Stomach (tissue), 19 donors: ENCODE measurements at regions of chr9 and their contacts with region 1.

Region 1: GRCh38 chr9:126781186-126782052 is 23.4 kb upstream of the ZBTB43 start:
- DNase-seq: peak; percentile 89 to 92
- H3K4me3 ChIP-seq: no peak overlapping the region
- H3K27ac ChIP-seq: no peak overlapping the region
- H3K4me1 ChIP-seq: peaks cover 0 to 7% (median 6%) of the 10 kb centered on the region in 4 donors
- H3K27me3 ChIP-seq: peaks cover 0 to 95% (median 24%) of the 10 kb centered on the region in 3 donors
- CTCF ChIP-seq: peak in 5 of 7 experiments; percentile 79 to 97 (median 94)
- EP300 ChIP-seq: no peak
- POLR2A ChIP-seq: no peak

Region 2: GRCh38 chr9:126611592-126612325 is 169.7 kb before region 1 on chr9:
- intact Hi-C with region 1: loop called (anchors 10 kb)
- DNase-seq: peak; percentile 81 to 90
- H3K4me3 ChIP-seq: peak overlapping the region; percentile 27 to 49 (median 32)
- H3K27ac ChIP-seq: no peak overlapping the region
- H3K4me1 ChIP-seq: peaks cover 39 to 56% (median 52%) of the 10 kb centered on the region in 4 donors
- H3K27me3 ChIP-seq: peaks cover 31 to 99% (median 74%) of the 10 kb centered on the region in 3 donors
- CTCF ChIP-seq: peak in 5 of 7 experiments; percentile 71 to 91 (median 73)
- EP300 ChIP-seq: no peak
- POLR2A ChIP-seq: no peak

Region 3: DNA sequence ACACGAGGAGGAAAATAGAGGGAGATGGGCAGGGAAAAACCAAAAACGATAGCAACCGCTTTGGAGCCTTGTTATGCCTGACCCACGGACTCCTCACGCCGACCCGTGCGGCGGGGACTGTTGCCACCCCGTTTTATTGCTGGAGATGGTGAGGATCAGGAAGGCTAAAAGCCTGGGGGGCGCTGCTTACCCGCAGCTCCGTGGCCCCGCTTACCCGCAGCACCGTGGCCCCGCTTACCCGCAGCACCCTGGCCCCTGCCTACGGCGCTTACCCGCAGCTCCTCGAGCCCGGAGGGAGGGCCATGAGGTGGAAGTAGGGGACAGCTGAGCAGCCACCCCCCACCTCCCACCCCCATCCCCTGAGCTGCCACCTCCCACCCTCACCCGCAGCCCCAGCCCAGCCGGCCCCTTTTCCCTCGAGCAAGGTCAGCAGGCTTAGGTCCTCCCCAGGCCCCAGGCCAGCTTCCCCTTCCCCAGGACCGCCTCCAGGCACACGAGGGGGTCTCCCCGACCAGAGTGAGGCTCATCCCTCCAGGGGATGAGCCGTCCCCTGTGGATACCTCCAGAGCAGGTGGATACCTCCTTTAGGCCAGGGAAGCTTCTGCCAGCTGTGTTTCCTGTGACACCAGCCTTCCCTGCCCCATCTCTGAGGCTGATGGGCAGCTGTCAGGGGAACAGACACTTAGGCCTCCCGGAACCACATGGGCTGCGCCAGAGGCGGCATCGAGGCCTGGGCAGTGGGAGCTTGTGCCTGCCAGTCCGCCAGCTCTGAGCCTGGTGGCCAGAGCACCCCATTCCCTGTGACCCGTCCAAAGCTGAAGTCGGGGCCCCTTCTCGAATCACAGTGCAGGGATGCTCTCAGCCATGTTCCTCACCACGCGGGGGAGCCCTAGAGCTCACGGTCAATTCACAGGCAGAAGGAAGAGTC is 75.4 kb before region 1 on chr9:
- intact Hi-C with region 1: loop called (anchors 2 kb)
- DNase-seq: peak; percentile 63 to 79
- H3K4me3 ChIP-seq: peak overlapping the region in 3 of 4 donors; percentile 20 to 39 (median 25)
- H3K27ac ChIP-seq: no peak overlapping the region
- H3K4me1 ChIP-seq: peaks cover 11 to 17% (median 16%) of the 10 kb centered on the region in 4 donors
- H3K27me3 ChIP-seq: peaks cover 0 to 72% (median 47%) of the 10 kb centered on the region in 3 donors
- CTCF ChIP-seq: peak in 5 of 7 experiments; percentile 20 to 58 (median 50)
- EP300 ChIP-seq: no peak
- POLR2A ChIP-seq: no peak

Region 4: DNA sequence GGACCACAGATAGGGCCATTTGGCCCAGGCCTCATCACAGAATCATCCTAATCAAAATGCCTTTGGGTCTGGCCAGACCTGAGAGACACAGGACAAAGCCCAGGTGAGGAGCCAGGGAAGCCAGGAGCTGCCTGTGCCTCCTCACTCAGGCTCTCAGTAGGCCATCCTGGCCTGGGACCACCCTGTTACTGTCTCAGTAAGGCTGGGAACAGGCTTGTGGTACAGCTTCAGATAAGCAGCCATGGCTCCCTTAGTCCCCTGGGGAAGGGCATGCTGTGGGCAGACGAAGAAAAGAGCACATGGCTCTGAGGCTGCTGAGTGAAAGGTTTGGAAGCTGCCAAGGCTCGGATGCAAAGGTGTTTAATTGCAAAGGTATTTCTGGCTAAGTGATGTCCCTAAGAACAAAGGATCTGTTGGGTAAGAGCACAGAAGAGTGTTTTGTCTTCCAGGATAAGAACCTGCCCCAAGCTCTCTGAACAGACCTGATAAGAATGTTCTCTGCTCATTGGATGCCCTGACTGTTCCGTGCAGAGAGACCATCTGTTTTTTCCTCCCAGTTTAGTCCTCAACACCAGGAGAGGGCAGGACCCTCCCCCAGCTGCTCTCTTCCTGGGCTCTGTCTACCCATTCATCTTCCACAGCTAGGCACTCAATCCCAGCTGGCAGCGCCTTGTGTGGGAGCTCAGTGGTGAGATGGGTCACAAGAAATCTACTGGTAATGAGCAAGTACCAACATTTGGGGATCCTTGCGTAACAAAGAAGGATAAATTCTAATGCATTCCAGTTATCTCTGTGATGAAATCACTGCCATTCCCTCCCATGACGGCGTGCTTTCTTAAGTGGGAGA is 323.3 kb after region 1 on chr9:
- intact Hi-C with region 1: no loop called
- DNase-seq: no peak
- H3K4me3 ChIP-seq: no peak overlapping the region
- H3K27ac ChIP-seq: peak overlapping the region in 1 of 5 donors; percentile 79
- H3K4me1 ChIP-seq: peaks cover 12 to 75% (median 36%) of the 10 kb centered on the region in 4 donors
- H3K27me3 ChIP-seq: no peaks in the 10 kb centered on the region
- CTCF ChIP-seq: no peak
- EP300 ChIP-seq: no peak
- POLR2A ChIP-seq: no peak